ENCODE measurements at regions of chr15 and their contacts with region 1.

Region 1: DNA sequence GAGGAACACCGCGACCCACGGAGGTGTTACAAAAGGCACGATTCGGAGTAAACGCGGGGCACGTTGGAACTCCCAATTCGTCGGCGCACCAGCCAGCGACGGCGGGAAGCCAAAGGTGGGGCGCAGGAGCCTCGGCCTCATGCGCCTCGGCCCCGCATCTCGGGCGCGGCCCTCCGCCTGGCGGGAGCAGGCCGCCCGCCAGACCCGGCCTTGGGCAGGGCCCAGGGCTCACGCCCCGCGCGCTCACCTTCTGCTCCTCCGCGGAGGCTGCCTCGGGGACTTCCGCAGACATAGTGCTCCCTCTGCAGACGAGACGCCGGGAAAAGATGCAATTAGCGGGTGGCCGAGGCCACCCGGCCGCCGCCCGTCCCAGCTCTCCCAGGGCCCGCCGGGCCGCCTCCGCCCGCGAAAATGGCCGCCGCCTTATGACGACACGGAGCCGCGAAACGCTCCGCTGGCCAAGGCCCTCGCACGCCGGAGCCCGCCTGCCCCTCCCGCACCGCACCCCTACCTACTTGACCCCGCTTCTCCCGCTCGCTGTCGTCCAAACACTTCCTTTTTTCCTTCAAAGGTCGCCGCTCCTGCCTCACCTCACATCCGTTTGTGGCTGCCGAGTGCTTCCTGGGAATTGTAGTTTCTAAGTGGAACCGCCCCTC is at the start of gene ARPP19:
- H3K4me3 Mint-ChIP-seq: peak within 1 kb of the TSS; percentile 90
- H3K27ac Mint-ChIP-seq: peak within 1 kb of the TSS; percentile 98
- H3K4me1 Mint-ChIP-seq: peaks cover 13% of the 10 kb centered on the region
- H3K27me3 Mint-ChIP-seq: no peaks in the 10 kb centered on the region

Region 2: GRCh38 chr15:52362502-52362901 is 206.2 kb before region 1 on chr15:
- intact Hi-C with region 1: loop called (anchors 5 kb)
- H3K4me3 Mint-ChIP-seq: no peak overlapping the region
- H3K27ac Mint-ChIP-seq: peak overlapping the region; percentile 82
- H3K4me1 Mint-ChIP-seq: peaks cover 36% of the 10 kb centered on the region
- H3K27me3 Mint-ChIP-seq: no peaks in the 10 kb centered on the region

Measured in dendritic cell treated with granulocyte-macrophage colony-stimulating factor and Interleukin-4, amounts not matched to agents 40 ng/mL and 50 ng/mL, for 4 days (primary cell).